Cardiac septum (tissue), 1 donor: ENCODE measurements at regions of chr15 and their contacts with region 1.

Region 1: GRCh38 chr15:47196057-47196456 is 521.2 kb upstream of the SEMA6D start:
- DNase-seq: peak; percentile 81

Region 2: DNA sequence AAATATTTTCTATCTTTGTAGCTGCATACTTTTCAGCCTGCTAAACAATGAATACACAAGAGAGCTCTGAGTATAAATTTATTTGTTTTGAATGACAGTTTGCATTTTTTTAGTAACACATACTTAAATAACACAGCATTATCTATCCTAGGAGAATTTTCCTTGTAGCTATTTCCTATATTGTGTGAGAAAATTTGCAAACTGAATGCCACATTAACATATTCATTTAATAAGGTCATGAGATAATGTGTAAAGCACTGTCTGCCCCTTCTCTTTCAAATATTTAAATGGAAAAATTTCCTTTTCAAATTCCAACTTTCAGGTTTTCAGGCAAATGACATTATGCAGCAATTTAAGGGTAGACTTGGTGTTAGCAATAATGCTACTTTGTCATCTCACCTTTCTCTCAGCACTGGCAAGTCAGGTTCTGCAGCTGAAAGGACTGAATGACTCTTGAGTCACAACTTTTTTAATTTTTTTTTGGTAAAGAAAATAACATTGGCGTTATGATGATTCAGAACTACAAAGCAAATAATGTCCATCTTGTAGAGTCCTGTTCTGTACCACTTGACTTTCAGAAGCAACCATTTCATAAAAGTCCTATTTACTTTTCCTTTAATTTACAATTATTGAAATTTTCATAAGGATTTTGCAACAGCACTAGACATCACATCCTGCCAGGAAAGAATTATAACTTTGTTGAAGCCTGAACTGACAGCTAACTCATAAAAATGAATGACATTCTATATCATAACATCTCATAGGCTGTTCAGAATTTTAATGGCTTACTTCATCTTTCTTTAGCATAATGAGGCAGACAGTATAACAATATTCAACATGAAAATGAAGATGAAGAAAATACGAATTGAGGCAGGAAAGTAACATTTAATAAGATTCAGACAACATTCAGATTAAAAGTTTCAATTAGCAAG is 160.3 kb before region 1 on chr15:
- intact Hi-C with region 1: no loop called
- DNase-seq: no peak

Region 3: DNA sequence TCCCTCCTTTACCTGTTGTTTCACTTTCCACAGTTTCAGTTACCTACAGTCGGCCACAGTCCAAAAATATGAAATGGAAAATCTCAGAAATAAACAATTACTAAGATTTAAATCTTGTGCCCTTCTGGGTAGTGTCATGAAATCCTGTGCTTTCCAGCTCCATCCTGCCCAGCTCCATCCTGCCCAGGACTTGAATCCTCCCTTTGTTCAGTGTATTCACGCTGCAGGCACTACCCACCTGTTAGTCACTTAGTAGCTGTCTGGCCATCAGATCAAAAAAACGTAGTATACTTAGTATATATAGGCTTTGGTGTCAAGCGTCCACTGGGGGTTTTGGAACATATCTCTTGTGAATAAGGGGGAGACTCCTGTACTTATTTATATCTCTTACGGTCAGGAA is 192.2 kb after region 1 on chr15:
- intact Hi-C with region 1: no loop called
- DNase-seq: no peak

Region 4: GRCh38 chr15:47473832-47474231 is 277.8 kb after region 1 on chr15:
- intact Hi-C with region 1: loop called (anchors 10 kb)
- DNase-seq: peak; percentile 76

Region 5: DNA sequence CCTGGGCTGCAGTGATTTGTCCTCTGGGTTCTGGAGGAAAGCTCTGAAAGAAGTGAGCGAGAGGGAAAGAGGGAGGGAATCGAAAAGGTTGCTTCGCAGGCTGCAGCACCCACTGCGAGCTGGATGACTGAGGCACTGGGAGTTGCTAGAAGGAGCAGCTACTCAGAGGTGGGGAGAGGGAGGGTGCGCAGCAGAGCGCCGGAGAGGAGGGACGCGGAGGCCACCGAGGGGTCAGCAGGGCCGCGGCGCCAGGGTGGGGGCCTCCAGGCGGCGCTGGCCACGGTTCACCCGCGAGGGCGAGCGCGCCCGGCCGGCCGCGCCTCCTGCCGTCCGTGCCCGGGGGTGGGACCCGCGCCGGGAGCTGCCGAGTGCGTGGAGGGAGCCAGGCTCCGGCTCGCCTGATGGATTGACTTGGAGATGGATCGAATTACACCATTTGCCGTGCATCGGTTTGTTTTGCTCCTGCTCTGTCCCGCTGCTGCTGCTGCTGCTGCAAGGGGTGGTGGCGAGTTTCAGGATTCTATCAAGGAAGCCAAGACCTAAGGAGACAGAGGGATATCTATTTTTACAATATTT is 521.1 kb after region 1 on chr15 and contains the start of gene SEMA6D:
- intact Hi-C with region 1: loop called (anchors 10 kb)
- DNase-seq: peak; percentile 81
- total RNA-seq, gene SEMA6D: 9.9 TPM

Region 6: DNA sequence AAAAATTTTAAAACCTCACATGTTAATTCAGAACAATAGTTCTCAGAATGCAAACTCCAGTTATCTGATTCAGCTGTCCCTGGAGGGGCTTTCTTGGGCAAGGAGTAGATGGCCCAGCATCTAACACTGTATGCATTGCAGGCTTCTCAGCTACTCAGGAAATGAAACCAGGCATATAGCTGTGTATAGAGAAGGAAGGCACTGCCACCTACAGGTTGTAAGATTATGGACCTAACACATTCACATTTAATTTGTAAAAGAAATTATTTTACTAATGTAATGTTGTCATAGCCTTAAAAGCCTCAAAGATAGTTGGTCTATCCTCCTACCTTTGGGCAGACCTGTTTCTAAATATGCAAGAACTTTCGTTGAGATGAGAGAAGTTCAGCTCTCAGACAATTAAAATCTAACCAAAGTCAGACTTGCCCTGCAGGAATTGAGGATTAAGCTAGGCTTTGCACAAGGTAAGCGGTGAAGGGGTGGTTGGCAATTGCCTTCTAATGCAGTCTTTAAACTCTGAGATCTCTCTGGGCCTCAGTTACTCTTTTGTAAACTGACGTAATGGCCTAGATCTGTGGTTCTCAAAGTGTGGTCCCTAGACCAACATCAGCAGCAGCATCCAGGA is 792.0 kb after region 1 on chr15:
- intact Hi-C with region 1: loop called (anchors 2 kb)
- DNase-seq: no peak

Region 7: GRCh38 chr15:48285329-48286214 is 1089.5 kb after region 1 on chr15:
- intact Hi-C with region 1: loop called (anchors 5 kb)
- DNase-seq: no peak

Region 8: GRCh38 chr15:48352474-48353072 is 1156.5 kb after region 1 on chr15:
- intact Hi-C with region 1: loop called (anchors 10 kb)
- DNase-seq: no peak